CD8-positive, alpha-beta T cell (primary cell): ENCODE measurements at regions of chr16 and their contacts with region 1.

Region 1: DNA sequence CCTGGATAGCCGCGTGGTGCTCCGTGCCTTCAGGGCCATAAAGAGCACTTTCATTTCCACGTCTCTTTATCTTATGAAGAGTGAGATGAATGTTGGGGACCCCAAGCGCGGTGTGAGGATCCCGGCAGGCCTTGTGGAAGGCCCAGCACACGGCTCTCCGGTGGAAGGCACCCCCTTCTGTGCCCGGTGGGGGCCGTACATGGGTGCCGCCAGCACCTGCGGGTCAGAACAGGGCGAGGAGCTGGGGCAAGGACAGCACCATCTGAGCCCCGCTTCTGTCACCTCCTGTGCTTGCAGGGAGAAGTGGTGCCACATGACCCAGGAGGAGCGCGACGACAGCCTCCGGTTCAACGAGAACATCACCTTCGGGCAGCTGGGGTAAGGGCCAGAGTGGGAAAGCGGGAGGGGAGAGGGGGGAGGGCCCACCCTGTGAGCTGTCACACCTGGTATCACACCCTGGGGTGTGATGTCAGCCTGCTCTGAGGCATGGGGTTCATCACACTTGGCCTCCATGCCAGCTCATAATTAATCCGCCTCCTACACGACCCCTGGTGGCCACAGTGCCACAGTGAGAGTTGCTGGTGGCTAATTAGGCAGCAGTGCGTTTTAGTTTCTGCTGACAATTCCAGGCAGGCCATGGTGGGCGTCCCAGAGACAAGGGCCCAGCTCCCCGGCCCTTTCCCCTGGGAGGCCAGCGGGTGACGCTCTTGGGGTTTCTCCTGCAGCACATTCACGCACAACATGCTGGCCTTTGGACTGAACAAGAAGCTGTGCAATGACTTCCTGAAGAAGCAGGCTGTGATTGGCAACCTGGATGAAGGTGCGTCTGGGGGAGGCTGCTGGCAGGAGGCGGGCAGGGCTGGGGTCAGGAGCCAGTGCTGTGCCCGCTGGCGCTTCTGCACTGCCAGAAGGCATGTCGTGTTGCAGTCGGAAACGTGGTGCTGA is 25.7 kb downstream of the CIBAR2 start:
- DNase-seq: peak; percentile 64 to 85 (median 77)
- ATAC-seq: peak; percentile 78
- H3K4me3 ChIP-seq: no peak overlapping the region
- H3K4me3 Mint-ChIP-seq: peak overlapping the region; percentile 58
- H3K27ac ChIP-seq: no peak overlapping the region
- H3K27ac Mint-ChIP-seq: peak overlapping the region; percentile 73
- H3K4me1 ChIP-seq: peaks cover 15% of the 10 kb centered on the region
- H3K4me1 Mint-ChIP-seq: peaks cover 41% of the 10 kb centered on the region
- H3K27me3 ChIP-seq: no peaks in the 10 kb centered on the region
- H3K27me3 Mint-ChIP-seq: no peaks in the 10 kb centered on the region
- CTCF ChIP-seq: peak; percentile 73

Region 2: DNA sequence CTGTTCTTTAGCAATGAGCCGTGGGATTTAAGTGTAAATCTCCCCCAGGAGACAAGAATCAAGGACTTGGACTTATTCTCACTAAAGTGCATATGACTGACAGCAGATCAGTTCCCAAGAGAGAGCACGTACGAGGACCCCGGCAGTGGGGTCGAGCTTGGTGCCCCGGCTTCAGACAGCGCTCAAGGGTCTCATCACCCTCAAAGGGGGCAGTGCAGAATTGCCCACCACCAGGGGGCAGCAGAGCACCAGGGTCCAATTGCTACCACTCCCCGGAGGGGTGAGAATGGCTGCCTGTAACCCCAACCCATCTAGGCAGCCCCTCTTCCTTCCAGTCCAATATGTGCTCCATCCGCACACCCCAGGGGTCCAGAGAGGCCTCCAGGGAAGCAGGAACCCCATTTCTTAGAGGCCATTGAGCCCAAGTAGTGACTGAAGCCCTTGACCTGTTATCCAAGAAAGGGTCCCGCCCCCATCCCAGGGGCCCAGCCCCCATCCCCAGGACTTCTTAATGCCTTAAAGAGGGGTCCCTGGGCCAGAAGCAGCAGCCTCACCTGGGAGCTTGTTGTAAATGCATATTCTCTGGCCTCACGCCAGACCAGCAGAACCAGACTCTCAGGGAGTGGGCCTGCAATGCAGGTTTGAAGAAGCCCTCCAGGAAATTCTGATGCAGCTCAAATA is 161.4 kb before region 1 on chr16:
- CTCF ChIA-PET with region 1: interaction called, 4 read pairs
- POLR2A ChIA-PET with region 1: no interaction called
- intact Hi-C with region 1: loop called in 1 of 2 experiments (anchors 1 kb)
- DNase-seq: peak; percentile 37 to 81 (median 64)
- ATAC-seq: peak; percentile 65
- H3K4me3 ChIP-seq: no peak overlapping the region
- H3K4me3 Mint-ChIP-seq: no peak overlapping the region
- H3K27ac ChIP-seq: no peak overlapping the region
- H3K27ac Mint-ChIP-seq: no peak overlapping the region
- H3K4me1 ChIP-seq: peaks cover 1% of the 10 kb centered on the region
- H3K4me1 Mint-ChIP-seq: peaks cover 3% of the 10 kb centered on the region
- H3K27me3 ChIP-seq: no peaks in the 10 kb centered on the region
- H3K27me3 Mint-ChIP-seq: peaks cover 7% of the 10 kb centered on the region
- CTCF ChIP-seq: peak; percentile 72

Region 3: DNA sequence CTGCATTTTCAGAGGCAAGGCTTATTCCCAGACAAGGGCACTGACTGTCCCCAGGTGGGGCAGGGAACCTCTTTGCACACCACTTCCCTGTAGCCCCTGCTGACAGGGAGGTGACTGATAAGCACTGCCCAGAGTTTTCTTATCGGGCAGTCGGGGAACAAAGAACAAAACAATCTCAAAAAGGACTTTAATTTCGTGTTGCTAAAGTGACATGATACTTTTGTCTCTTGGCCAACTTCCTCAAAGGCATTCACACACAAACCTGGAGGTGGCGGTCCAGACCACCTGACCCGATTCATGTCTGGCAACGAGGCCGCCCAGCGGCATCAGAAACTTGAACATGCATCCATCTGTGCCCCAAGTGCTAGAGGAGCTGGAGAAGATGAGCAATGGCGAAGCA is 104.2 kb before region 1 on chr16:
- CTCF ChIA-PET with region 1: interaction called, 8 read pairs
- POLR2A ChIA-PET with region 1: no interaction called
- intact Hi-C with region 1: loop called in 1 of 2 experiments (anchors 1 kb)
- DNase-seq: peak in 4 of 9 experiments; percentile 26 to 52 (median 42)
- ATAC-seq: no peak
- H3K4me3 ChIP-seq: no peak overlapping the region
- H3K4me3 Mint-ChIP-seq: no peak overlapping the region
- H3K27ac ChIP-seq: no peak overlapping the region
- H3K27ac Mint-ChIP-seq: no peak overlapping the region
- H3K4me1 ChIP-seq: no peaks in the 10 kb centered on the region
- H3K4me1 Mint-ChIP-seq: peaks cover 9% of the 10 kb centered on the region
- H3K27me3 ChIP-seq: no peaks in the 10 kb centered on the region
- H3K27me3 Mint-ChIP-seq: no peaks in the 10 kb centered on the region
- CTCF ChIP-seq: no peak

Region 4: DNA sequence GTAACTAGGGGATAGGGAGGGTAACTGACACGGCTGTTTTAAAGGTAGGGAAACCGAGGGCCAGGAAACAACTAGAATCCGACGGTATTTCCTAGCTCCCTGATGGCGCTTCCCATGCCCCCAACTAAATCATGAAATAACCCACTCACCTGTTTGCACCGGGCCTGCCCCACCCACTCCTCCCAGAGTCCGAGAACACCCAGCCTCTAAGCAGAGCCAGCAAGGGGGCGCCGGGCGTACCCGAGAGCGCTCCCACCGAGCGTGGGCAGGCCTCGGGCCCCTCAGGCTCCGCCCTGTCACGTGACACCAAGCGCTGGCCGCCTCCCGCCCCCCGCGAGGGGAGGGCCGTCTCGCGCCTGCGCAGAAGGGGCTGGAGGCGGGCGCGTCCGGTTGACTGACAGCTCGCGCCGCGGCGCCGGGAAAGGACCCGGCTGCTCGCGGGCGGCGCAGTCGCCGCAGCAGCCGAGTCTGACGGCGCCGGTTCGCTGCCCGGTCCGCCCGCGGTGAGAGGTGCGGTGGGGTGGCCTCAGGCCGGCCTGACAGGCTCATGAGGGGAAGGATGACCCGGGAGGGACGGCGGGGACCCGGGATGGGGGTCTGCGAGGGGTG is 59.2 kb before region 1 on chr16 and contains the start of gene KIAA0513:
- CTCF ChIA-PET with region 1: interaction called, 31 read pairs
- POLR2A ChIA-PET with region 1: interaction called, 6 read pairs
- intact Hi-C with region 1: loop called (anchors 1 kb)
- DNase-seq: peak; percentile 91 to 98 (median 97)
- ATAC-seq: peak; percentile 62
- H3K4me3 ChIP-seq: peak within 1 kb of the TSS; percentile 64 to 71
- H3K4me3 Mint-ChIP-seq: peak within 1 kb of the TSS; percentile 90
- H3K27ac ChIP-seq: peak within 1 kb of the TSS; percentile 62 to 73
- H3K27ac Mint-ChIP-seq: peak within 1 kb of the TSS; percentile 97
- H3K4me1 ChIP-seq: peaks cover 31% of the 10 kb centered on the region
- H3K4me1 Mint-ChIP-seq: peaks cover 43% of the 10 kb centered on the region
- H3K27me3 ChIP-seq: no peaks in the 10 kb centered on the region
- H3K27me3 Mint-ChIP-seq: no peaks in the 10 kb centered on the region
- CTCF ChIP-seq: no peak
- total RNA-seq, gene KIAA0513: 9.7 to 10.3 TPM

Region 5: GRCh38 chr16:85061566-85061965 is 25.1 kb before region 1 on chr16:
- CTCF ChIA-PET with region 1: interaction called, 14 read pairs
- POLR2A ChIA-PET with region 1: interaction called, 8 read pairs
- intact Hi-C with region 1: no loop called
- DNase-seq: peak in 1 of 9 experiments; percentile 58
- ATAC-seq: no peak
- H3K4me3 ChIP-seq: no peak overlapping the region
- H3K4me3 Mint-ChIP-seq: peak overlapping the region; percentile 47
- H3K27ac ChIP-seq: no peak overlapping the region
- H3K27ac Mint-ChIP-seq: peak overlapping the region; percentile 68
- H3K4me1 ChIP-seq: peaks cover 24% of the 10 kb centered on the region
- H3K4me1 Mint-ChIP-seq: peaks cover 56% of the 10 kb centered on the region
- H3K27me3 ChIP-seq: peaks cover 0 to 2% of the 10 kb centered on the region in 2 experiments
- H3K27me3 Mint-ChIP-seq: no peaks in the 10 kb centered on the region
- CTCF ChIP-seq: no peak

Region 6: DNA sequence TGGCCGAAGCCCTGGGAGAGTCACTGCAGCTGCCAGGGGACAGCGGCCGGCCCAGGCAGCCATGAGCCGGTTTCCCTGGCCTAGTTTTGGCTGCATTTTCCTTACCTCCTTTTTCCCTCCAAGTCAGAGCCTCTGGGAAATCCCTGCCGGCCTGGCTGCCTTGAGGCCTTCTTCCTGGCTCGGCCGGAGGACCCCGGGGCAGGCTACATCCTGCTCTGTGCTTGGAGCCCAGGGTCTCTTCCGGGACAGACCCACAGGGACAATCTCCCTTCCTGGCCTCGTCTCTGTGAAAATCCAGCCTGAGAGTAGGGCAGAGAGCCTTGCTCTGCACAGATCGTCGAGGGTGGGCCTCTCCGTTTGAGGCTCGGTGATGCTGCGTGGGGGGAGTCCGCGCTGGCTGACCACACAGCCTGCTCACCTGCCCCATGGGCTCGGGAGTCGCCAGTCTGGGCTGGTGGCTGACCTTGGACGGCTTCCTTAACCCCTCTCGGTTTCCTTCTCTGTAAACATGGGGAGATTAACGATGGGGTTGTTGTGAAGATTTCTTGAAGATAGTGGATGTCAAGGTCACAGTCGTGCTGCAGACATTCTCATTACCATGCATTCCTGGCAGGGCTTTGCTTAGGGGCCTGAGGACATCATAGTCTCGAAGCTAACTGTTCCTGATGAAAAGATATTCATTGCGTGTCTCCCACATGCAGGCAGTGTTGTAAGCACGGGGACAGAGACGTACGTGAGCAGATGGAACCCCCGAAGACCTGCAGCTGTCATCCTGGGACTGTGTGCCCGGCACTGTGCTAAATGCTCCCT is 60.5 kb after region 1 on chr16:
- CTCF ChIA-PET with region 1: no interaction called
- POLR2A ChIA-PET with region 1: no interaction called
- intact Hi-C with region 1: no loop called
- DNase-seq: peak in 1 of 9 experiments; percentile 1
- ATAC-seq: no peak
- H3K4me3 ChIP-seq: no peak overlapping the region
- H3K4me3 Mint-ChIP-seq: no peak overlapping the region
- H3K27ac ChIP-seq: no peak overlapping the region
- H3K27ac Mint-ChIP-seq: no peak overlapping the region
- H3K4me1 ChIP-seq: no peaks in the 10 kb centered on the region
- H3K4me1 Mint-ChIP-seq: no peaks in the 10 kb centered on the region
- H3K27me3 ChIP-seq: no peaks in the 10 kb centered on the region
- H3K27me3 Mint-ChIP-seq: no peaks in the 10 kb centered on the region
- CTCF ChIP-seq: no peak

Region 7: GRCh38 chr16:85321509-85322271 is 235.1 kb after region 1 on chr16:
- CTCF ChIA-PET with region 1: no interaction called
- POLR2A ChIA-PET with region 1: no interaction called
- intact Hi-C with region 1: no loop called
- DNase-seq: no peak
- ATAC-seq: no peak
- H3K4me3 ChIP-seq: no peak overlapping the region
- H3K4me3 Mint-ChIP-seq: no peak overlapping the region
- H3K27ac ChIP-seq: no peak overlapping the region
- H3K27ac Mint-ChIP-seq: no peak overlapping the region
- H3K4me1 ChIP-seq: no peaks in the 10 kb centered on the region
- H3K4me1 Mint-ChIP-seq: no peaks in the 10 kb centered on the region
- H3K27me3 ChIP-seq: no peaks in the 10 kb centered on the region
- H3K27me3 Mint-ChIP-seq: no peaks in the 10 kb centered on the region
- CTCF ChIP-seq: no peak